BJ (cell line): ENCODE measurements at regions of chr2 and their contacts with region 1.

Region 1: DNA sequence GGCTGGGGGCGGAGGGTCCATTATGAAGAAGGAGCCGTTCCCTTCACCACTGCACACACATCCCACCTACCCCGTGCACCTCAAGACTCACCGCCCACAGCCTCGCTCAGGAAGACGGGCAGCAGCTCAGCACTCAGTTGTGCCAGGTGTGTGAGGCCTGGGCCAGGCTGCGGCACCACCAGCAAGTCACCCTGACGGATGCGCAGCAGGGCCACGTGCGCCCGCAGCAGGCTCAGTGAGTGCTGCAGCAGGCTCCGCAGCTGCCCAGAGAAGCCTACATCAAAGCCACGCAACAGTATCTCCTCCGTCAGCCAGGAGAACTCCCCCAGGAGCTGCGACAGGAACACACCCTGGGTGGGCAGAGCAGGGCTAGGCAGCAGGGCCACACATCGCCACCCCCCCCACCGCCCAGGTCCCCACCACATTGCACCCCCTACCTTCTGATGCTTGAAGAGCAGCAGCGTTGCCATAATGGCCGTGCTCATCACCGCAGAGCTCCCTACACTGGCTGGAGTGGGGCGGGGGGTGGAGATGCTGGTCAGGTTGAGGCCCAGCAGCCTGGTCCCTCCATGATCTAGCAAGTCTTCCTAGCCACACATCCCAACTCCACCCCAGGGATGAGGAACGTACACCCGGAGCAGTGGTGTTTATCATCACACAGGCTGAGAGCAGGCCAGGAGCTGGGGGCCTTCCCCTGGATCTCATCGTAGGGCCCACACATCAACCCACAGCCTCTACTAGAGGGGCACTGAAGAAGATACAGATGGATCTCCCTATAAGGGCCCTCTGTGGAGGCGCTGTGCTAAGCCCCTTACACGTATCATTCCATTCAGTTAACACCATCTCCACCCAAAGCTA is 10.2 kb downstream of the GPAT2 start:
- DNase-seq: no peak
- H3K4me3 ChIP-seq: no peak overlapping the region
- H3K27me3 ChIP-seq: no peaks in the 10 kb centered on the region
- CTCF ChIP-seq: no peak

Region 2: GRCh38 chr2:96108541-96109360 is 84.2 kb after region 1 on chr2:
- CTCF ChIA-PET with region 1: interaction called, 14 read pairs
- POLR2A ChIA-PET with region 1: no interaction called
- DNase-seq: no peak
- H3K4me3 ChIP-seq: no peak overlapping the region
- H3K27me3 ChIP-seq: peaks cover 10% of the 10 kb centered on the region
- CTCF ChIP-seq: no peak

Region 3: DNA sequence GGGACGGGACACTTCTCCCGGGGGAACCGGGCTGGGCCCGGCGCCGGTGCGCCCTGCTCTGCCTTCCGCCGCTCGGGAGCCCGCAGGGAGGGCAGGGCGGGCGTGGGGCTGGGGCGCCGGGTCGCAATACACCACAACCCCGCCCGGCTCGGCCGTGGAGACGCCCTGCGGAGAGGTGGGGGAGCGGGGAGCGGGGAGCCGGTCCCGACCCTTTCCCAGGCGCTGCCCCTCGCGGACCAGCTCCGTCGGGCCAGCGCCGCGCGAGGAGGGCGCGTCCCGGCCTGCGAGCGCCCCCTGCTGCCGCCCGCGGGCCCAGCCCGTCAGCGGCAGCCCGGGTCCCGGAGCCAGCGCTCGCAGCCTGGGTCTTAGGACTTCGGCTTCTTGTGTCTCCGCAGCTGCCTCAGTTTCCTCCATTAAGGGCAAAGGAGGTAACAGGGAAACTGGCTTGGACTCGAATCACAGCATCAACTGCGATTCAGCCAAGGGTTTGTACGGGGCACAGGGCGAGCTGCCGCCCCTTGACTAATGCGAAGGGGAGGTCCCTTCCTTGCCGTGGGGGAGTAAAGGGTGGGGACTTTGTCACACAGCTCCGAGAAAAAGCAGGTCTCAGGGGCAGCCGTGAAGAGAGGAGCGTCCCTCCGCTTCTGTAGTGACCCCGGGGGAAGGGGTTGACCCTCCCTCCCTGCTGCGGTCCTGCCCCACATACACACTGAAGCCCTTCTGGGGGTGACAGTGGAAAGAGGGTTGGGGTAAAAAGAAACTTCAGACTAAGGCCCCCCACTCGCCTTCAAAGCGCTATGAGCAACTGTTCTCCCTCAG is 92.5 kb after region 1 on chr2:
- CTCF ChIA-PET with region 1: interaction called, 31 read pairs
- POLR2A ChIA-PET with region 1: no interaction called
- DNase-seq: no peak
- H3K4me3 ChIP-seq: peak overlapping the region; percentile 20
- H3K27me3 ChIP-seq: peaks cover 45% of the 10 kb centered on the region
- CTCF ChIP-seq: peak; percentile 50

Region 4: DNA sequence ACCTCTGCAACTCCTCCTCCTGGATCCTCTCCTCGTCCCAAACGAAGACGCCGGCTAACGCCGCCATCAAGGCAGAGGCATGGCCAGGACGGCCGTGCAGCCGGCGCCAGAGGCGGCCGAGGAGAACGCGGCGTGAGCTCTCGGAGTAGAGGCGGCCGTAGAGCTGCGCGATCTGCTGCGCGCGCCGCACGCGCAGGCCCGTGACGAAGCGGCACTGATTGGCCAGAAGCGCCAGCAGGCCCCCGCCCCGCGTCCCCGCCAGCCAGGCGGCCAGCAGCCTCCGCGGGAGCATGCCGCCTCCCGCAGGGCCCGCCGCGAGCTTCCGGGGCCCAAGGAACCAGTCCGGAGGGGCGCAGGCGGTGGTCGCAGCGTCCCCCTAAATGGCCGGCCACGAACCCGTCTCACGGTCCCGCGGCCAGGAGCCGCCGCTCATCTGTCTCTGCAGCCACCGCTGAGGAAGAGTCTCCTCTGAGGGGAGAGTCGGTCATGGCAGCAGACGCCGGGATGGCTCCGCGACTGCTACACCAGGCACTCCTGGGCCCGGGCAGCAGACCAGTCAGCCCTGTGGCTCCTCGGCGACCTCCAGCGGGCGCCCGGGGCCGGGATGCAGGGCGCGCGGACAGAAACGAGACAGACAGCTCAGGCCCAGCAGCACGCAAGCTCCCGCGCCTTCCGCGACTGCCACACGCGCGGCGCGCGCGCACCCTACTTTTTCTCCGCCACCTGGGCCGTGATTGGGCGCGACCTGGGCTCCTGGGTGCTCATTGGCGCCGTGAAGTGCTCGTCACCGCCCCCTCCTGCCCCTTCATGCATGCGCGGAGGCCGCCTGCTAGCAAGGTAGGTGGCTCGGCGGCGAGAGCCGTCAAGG is 183.8 kb after region 1 on chr2 and contains the start of gene STARD7:
- CTCF ChIA-PET with region 1: no interaction called
- POLR2A ChIA-PET with region 1: no interaction called
- DNase-seq: peak; percentile 76
- H3K4me3 ChIP-seq: peak within 1 kb of the TSS; percentile 96
- H3K27me3 ChIP-seq: no peaks in the 10 kb centered on the region
- CTCF ChIP-seq: 0 out of 2 replicates have a peak, but pooled peaks have one; percentile 14
- polyA plus RNA-seq, gene STARD7: 56.1 and 101 TPM in 2 replicates